CD4-positive, alpha-beta T cell (primary cell): ENCODE measurements at regions of chr19 and their contacts with region 1.

Region 1: DNA sequence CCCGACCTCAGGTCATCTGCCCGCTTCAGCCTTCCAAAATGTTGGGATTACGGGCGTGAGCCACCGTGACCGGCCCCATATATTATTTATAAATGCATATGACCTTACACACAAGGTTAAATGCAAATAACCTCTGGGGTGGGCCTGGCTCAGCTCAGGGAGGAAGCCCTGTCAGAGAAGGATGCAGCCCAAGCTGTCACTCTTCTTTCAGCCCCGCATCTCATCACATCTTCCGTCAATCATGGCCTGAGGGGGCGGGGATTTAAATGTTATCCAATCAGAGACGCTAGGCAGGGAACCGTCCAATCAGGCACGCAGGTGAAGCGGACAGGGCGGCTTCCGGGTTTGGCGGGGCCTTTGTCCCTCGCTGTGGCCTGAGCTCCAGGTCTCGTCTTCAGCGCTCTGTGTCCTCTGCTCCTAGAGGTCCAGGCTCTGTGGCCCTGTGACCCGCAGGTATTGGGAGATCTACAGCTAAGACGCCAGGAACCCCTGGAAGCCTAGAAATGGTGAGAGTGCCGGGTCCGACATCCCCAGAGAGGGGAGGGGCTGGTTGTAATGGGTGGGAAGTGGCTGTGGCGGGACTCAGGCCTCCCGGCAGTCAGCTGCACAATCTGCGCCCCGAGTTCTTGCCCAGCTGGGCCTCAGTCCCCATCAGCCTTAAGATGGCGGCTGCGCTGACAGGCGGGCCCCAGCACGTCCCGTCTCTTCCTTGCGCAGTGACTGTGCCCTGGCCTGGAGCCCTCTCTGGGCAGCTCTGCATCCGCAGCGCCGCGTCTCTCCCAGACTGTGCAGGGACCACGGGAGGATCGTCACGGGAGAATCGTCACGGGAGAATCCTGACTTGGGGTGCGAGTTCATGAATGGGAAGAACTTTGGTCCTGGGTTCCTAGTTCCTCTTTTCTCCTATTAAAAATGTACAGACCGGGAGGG is at the start of gene ZNF430:
- DNase-seq: peak; percentile 82 to 98 (median 87)
- ATAC-seq: peak; percentile 95
- H3K4me3 ChIP-seq: peak within 1 kb of the TSS; percentile 98
- H3K4me3 Mint-ChIP-seq: peak within 1 kb of the TSS; percentile 98
- H3K27ac ChIP-seq: peak within 1 kb of the TSS; percentile 86 to 93
- H3K27ac Mint-ChIP-seq: peak within 1 kb of the TSS; percentile 100
- H3K4me1 ChIP-seq: peaks cover 29% of the 10 kb centered on the region
- H3K4me1 Mint-ChIP-seq: peaks cover 52% of the 10 kb centered on the region
- H3K27me3 ChIP-seq: no peaks in the 10 kb centered on the region
- H3K27me3 Mint-ChIP-seq: no peaks in the 10 kb centered on the region
- CTCF ChIP-seq: no peak
- total RNA-seq, gene ZNF430: 40.5 to 43.8 TPM

Region 2: DNA sequence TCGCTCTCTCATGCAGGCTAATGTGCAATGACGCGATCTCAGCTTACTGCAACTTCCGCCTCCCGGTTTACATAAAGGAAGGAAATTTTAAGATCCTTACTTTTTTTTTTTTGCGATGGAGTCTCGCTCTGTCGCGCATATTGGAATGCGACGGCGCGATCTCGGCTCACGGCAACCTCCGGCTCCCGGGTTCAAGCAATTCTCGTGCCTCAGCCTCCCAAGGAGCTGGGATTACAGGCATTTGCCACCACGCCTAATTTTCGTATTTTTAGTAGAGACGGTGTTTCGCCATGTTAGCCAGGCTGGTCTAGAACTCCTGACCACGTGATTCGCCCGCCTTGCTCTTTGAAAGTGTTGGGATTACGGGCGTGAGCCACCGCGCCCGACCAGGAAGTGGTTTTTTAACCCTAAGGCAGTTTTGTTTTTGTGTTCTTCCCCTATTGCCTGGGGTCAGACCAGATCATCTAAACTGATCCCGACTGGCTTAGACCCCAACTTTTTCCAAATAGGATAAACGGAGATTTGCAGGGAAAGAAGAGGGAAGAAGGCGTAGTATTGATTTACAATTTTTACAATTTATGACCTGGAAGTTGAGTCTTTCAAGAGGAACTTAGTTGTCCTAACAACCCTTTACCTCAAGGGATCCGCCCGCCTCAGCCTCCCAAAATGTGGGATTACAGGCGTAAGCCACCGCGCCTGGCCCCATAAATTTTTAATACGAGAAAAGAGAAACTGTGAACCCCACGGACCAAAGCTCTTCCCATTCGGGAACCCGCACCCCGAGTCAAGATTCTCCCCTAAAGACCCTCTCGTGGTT is 597.0 kb before region 1 on chr19:
- CTCF ChIA-PET with region 1: no interaction called
- POLR2A ChIA-PET with region 1: interaction called, 16 read pairs
- intact Hi-C with region 1: loop called in 1 of 2 experiments (anchors 5 kb)
- DNase-seq: peak in 9 of 14 experiments; percentile 6 to 64 (median 34)
- ATAC-seq: no peak
- H3K4me3 ChIP-seq: peak overlapping the region; percentile 83
- H3K4me3 Mint-ChIP-seq: peak overlapping the region; percentile 97
- H3K27ac ChIP-seq: peak overlapping the region; percentile 57 to 65
- H3K27ac Mint-ChIP-seq: peak overlapping the region; percentile 90
- H3K4me1 ChIP-seq: peaks cover 9% of the 10 kb centered on the region
- H3K4me1 Mint-ChIP-seq: peaks cover 15% of the 10 kb centered on the region
- H3K27me3 ChIP-seq: no peaks in the 10 kb centered on the region
- H3K27me3 Mint-ChIP-seq: no peaks in the 10 kb centered on the region
- CTCF ChIP-seq: no peak

Region 3: GRCh38 chr19:20923077-20923871 is 97.3 kb before region 1 on chr19 and contains the start of gene ZNF85:
- CTCF ChIA-PET with region 1: no interaction called
- POLR2A ChIA-PET with region 1: interaction called, 43 read pairs
- intact Hi-C with region 1: loop called (anchors 2 to 5 kb)
- DNase-seq: peak; percentile 79 to 97 (median 86)
- ATAC-seq: peak; percentile 99
- H3K4me3 ChIP-seq: peak within 1 kb of the TSS; percentile 83
- H3K4me3 Mint-ChIP-seq: peak within 1 kb of the TSS; percentile 96
- H3K27ac ChIP-seq: peak within 1 kb of the TSS; percentile 44 to 75
- H3K27ac Mint-ChIP-seq: peak within 1 kb of the TSS; percentile 89
- H3K4me1 ChIP-seq: peaks cover 12% of the 10 kb centered on the region
- H3K4me1 Mint-ChIP-seq: peaks cover 26% of the 10 kb centered on the region
- H3K27me3 ChIP-seq: no peaks in the 10 kb centered on the region
- H3K27me3 Mint-ChIP-seq: no peaks in the 10 kb centered on the region
- CTCF ChIP-seq: no peak
- total RNA-seq, gene ZNF85: 3.4 to 4.7 TPM

Region 4: GRCh38 chr19:20999731-21000352 is 20.7 kb before region 1 on chr19:
- CTCF ChIA-PET with region 1: interaction called, 4 read pairs
- POLR2A ChIA-PET with region 1: interaction called, 45 read pairs
- intact Hi-C with region 1: loop called in 1 of 2 experiments (anchors 2 kb)
- DNase-seq: peak; percentile 66 to 94 (median 80)
- ATAC-seq: peak; percentile 100
- H3K4me3 ChIP-seq: peak overlapping the region; percentile 54
- H3K4me3 Mint-ChIP-seq: peak overlapping the region; percentile 85
- H3K27ac ChIP-seq: no peak overlapping the region
- H3K27ac Mint-ChIP-seq: peak overlapping the region; percentile 32
- H3K4me1 ChIP-seq: peaks cover 10% of the 10 kb centered on the region
- H3K4me1 Mint-ChIP-seq: peaks cover 13% of the 10 kb centered on the region
- H3K27me3 ChIP-seq: no peaks in the 10 kb centered on the region
- H3K27me3 Mint-ChIP-seq: no peaks in the 10 kb centered on the region
- CTCF ChIP-seq: no peak

Region 5: GRCh38 chr19:21082011-21082975 is 61.7 kb after region 1 on chr19 and contains the start of gene ZNF714:
- CTCF ChIA-PET with region 1: no interaction called
- POLR2A ChIA-PET with region 1: interaction called, 17 read pairs
- intact Hi-C with region 1: loop called (anchors 5 kb)
- DNase-seq: peak; percentile 57 to 93 (median 74)
- ATAC-seq: peak; percentile 99
- H3K4me3 ChIP-seq: peak within 1 kb of the TSS; percentile 85
- H3K4me3 Mint-ChIP-seq: peak within 1 kb of the TSS; percentile 100
- H3K27ac ChIP-seq: peak within 1 kb of the TSS in 1 of 2 donors; percentile 26
- H3K27ac Mint-ChIP-seq: peak within 1 kb of the TSS; percentile 95
- H3K4me1 ChIP-seq: peaks cover 10% of the 10 kb centered on the region
- H3K4me1 Mint-ChIP-seq: peaks cover 4% of the 10 kb centered on the region
- H3K27me3 ChIP-seq: no peaks in the 10 kb centered on the region
- H3K27me3 Mint-ChIP-seq: no peaks in the 10 kb centered on the region
- CTCF ChIP-seq: no peak
- total RNA-seq, gene ZNF714: 8.0 to 10.0 TPM

Region 6: DNA sequence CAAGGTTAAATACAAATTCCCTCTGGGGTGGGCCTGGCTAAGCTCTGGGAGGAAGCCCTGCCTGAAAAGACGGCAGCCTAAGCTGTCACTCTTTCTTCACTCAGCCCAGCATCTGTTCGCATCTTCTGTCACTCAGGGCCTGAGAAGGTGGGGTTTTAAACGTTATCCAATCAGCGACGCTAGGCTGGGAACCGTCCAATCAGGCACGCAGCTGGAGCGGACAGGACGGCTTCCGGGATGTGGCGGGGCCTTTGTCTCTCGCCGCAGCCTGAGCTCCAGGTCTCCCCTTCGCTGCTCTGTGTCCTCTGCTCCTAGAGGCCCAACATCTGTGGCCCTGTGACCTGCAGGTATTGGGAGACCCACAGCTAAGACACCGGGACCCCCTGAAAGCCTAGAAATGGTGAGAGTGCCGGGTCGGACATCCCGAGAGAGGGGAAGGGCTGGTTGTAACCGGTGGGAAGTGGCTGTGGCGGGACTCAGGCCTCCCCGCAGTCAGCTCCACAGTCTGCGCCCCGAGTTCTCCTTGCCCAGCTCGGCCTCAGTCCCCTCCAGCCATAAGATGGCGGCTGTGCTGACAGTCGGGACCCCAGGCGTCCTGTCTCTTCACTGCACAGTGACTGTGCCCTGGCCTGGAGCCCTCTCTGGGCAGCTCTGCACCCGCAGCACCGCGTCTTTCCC is 121.4 kb after region 1 on chr19 and contains the start of gene ZNF431:
- CTCF ChIA-PET with region 1: no interaction called
- POLR2A ChIA-PET with region 1: interaction called, 23 read pairs
- intact Hi-C with region 1: loop called (anchors 2 to 5 kb)
- DNase-seq: peak; percentile 79 to 96 (median 84)
- ATAC-seq: peak; percentile 99
- H3K4me3 ChIP-seq: peak within 1 kb of the TSS; percentile 67
- H3K4me3 Mint-ChIP-seq: peak within 1 kb of the TSS; percentile 95
- H3K27ac ChIP-seq: peak within 1 kb of the TSS; percentile 25 to 37
- H3K27ac Mint-ChIP-seq: peak within 1 kb of the TSS; percentile 91
- H3K4me1 ChIP-seq: peaks cover 8% of the 10 kb centered on the region
- H3K4me1 Mint-ChIP-seq: peaks cover 45% of the 10 kb centered on the region
- H3K27me3 ChIP-seq: no peaks in the 10 kb centered on the region
- H3K27me3 Mint-ChIP-seq: no peaks in the 10 kb centered on the region
- CTCF ChIP-seq: no peak
- total RNA-seq, gene ZNF431: 24.6 to 25.9 TPM